ENCODE measurements at regions of chr10 and their contacts with region 1.

Region 1: GRCh38 chr10:101018600-101019439 is 12.1 kb downstream of the PDZD7 start:
- DNase-seq: peak; percentile 71
- H3K4me3 ChIP-seq: peak overlapping the region in 1 of 3 experiments; percentile 2
- H3K27ac ChIP-seq: no peak overlapping the region
- H3K4me1 ChIP-seq: peaks cover 25% of the 10 kb centered on the region
- H3K27me3 ChIP-seq: no peaks in the 10 kb centered on the region
- CTCF ChIP-seq: peak; percentile 64 to 83

Region 2: GRCh38 chr10:101042667-101043355 is 24.0 kb after region 1 on chr10:
- CTCF ChIA-PET with region 1: interaction called, 3 read pairs
- dilution Hi-C with region 1: no loop called
- in situ Hi-C with region 1: no loop called
- intact Hi-C with region 1: loop called (anchors 1 kb)
- DNase-seq: peak; percentile 96
- H3K4me3 ChIP-seq: peak overlapping the region; percentile 44 to 56 (median 54)
- H3K27ac ChIP-seq: peak overlapping the region; percentile 86
- H3K4me1 ChIP-seq: peaks cover 39% of the 10 kb centered on the region
- H3K27me3 ChIP-seq: no peaks in the 10 kb centered on the region
- CTCF ChIP-seq: no peak

Region 3: DNA sequence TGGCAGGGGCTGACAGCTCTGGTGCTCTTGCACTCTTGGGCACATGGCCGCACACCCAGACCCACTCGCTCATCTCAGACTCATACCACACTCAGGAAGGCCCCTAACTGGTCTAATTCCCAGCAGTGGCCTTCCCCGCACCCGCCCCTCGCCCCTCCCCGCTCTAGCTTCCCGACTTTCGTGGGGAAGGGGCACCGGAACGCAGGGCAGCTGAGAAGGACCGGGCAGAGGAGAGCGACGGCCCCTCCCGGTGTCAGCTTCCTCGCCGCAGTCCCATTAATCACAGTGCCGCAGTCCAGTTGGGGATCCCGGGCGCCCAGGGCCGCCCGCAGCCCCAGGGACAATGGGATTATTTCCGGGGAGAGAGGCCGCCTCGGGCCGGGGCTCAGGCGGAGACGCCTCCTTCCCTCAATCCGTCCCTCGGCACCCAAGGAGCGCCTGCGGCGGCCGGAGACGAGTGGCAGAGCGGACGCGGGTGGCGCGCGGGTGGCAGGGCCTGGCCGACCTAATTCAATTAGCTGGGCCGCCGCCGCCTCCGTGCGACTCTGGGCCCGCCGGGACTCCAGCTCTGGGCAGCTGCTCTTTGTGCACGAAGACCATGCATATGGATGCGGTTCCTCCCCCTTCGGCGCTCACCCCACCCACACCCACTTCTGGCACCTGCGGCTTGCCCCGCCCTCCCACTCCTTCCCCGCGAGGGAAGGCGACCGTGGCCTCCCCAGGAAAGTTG is 104.4 kb after region 1 on chr10:
- CTCF ChIA-PET with region 1: interaction called, 13 read pairs
- dilution Hi-C with region 1: no loop called
- in situ Hi-C with region 1: no loop called
- intact Hi-C with region 1: no loop called
- DNase-seq: no peak
- H3K4me3 ChIP-seq: peak overlapping the region in 1 of 3 experiments; percentile 6
- H3K27ac ChIP-seq: no peak overlapping the region
- H3K4me1 ChIP-seq: peaks cover 26% of the 10 kb centered on the region
- H3K27me3 ChIP-seq: peaks cover 33% of the 10 kb centered on the region
- CTCF ChIP-seq: no peak

Region 4: DNA sequence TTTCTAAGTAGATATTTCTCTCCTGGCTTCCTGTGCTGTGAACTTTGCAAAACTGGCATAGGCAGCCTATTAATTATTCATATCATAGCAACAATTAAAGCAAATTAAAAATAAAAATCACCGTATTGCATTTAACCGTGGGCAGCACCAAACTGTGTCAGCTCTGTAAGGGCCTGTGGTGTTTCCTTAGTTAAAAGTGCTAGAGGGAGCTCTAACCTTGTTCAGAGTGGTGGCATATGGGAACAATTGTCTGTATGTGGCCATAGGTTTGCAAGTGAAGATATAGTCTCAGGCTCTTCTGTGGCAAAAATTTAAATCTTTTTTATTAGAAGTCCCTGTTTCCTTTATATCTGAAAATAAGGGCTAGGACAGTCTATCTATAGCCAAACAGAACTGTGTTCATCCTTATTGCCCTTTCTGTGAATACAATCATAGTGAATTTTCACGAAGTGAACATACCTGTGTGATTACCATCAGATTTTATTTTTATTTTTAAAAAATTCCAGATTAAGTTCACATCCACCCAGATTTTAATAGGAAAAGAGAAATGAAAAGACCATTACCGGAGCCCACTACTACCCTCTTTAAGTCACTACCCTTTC is 476.6 kb after region 1 on chr10:
- CTCF ChIA-PET with region 1: no interaction called
- dilution Hi-C with region 1: no loop called
- in situ Hi-C with region 1: no loop called
- intact Hi-C with region 1: no loop called
- DNase-seq: peak; percentile 14
- H3K4me3 ChIP-seq: no peak overlapping the region
- H3K27ac ChIP-seq: no peak overlapping the region
- H3K4me1 ChIP-seq: no peaks in the 10 kb centered on the region
- H3K27me3 ChIP-seq: no peaks in the 10 kb centered on the region
- CTCF ChIP-seq: peak; percentile 11 to 47